Ovary (tissue), 10 donors: ENCODE measurements at regions of chr10 and their contacts with region 1.

Region 1: DNA sequence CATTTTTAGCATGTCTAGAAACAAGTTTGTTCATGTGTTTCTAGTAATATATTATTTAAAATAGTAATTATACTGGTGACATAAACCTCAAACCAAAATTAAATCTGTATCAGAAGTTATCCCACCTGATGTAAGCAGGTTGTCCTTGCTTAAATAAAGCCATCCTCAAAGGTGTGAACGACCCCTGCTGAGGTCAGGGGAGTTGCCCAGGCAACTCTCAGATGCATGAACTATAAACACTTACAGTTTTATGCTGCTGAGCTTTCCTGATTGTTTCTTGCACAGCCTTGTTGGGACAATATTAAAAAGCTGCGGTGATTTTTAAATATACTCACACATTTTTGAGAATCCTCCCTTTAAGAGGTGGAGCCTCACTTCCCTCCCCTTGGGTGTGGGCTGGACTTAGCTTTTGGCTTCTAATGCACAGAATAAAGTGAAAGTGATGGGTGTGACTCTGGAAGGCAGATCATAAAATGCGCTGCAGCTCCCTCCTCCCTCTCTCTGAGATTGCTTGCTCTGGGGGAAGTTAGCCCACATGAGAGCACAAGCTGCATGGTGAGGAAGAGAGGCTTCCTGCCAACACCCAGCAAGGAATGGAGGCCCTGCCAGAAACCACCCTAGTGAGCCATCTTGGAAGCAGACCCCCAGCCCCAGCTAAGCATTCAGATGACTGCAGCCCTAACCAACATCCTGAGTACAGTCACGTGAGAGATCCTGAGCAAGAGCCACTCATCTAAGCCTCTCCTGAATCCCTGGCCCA is 152.7 kb downstream of the SKIDA1 start:
- DNase-seq: peak; percentile 57 to 66 (median 63)
- H3K4me3 ChIP-seq: no peak overlapping the region
- H3K27ac ChIP-seq: peak overlapping the region in 1 of 2 donors; percentile 8
- H3K4me1 ChIP-seq: peaks cover 3% of the 10 kb centered on the region
- H3K27me3 ChIP-seq: no peaks in the 10 kb centered on the region
- CTCF ChIP-seq: no peak
- EP300 ChIP-seq: no peak
- POLR2A ChIP-seq: no peak

Region 2: GRCh38 chr10:19683960-19684359 is 1688.9 kb before region 1 on chr10:
- intact Hi-C with region 1: no loop called
- DNase-seq: no peak
- H3K4me3 ChIP-seq: no peak overlapping the region
- H3K27ac ChIP-seq: no peak overlapping the region
- H3K4me1 ChIP-seq: no peaks in the 10 kb centered on the region
- H3K27me3 ChIP-seq: no peaks in the 10 kb centered on the region
- CTCF ChIP-seq: no peak
- EP300 ChIP-seq: no peak
- POLR2A ChIP-seq: no peak

Region 3: GRCh38 chr10:21285742-21286331 is 87.0 kb before region 1 on chr10:
- intact Hi-C with region 1: loop called in 1 of 4 experiments (anchors 10 kb)
- DNase-seq: no peak
- H3K4me3 ChIP-seq: no peak overlapping the region
- H3K27ac ChIP-seq: no peak overlapping the region
- H3K4me1 ChIP-seq: no peaks in the 10 kb centered on the region
- H3K27me3 ChIP-seq: no peaks in the 10 kb centered on the region
- CTCF ChIP-seq: no peak
- EP300 ChIP-seq: no peak
- POLR2A ChIP-seq: no peak